Common myeloid progenitor, CD34-positive (primary cell): ENCODE measurements at regions of chr5 and their contacts with region 1.

Region 1: GRCh38 chr5:170614720-170615119 is 110.9 kb downstream of the KCNIP1 start:
- DNase-seq: no peak
- H3K4me3 ChIP-seq: no peak overlapping the region
- H3K27ac ChIP-seq: no peak overlapping the region
- H3K4me1 ChIP-seq: peaks cover 0 to 7% (median 1%) of the 10 kb centered on the region in 4 experiments
- H3K27me3 ChIP-seq: peaks cover 0 to 6% (median 0%) of the 10 kb centered on the region in 5 experiments

Region 2: GRCh38 chr5:170363671-170364070 is 251.0 kb before region 1 on chr5:
- CTCF ChIA-PET with region 1: no interaction called
- POLR2A ChIA-PET with region 1: no interaction called
- DNase-seq: peak; percentile 13 to 85 (median 80)
- H3K4me3 ChIP-seq: no peak overlapping the region
- H3K27ac ChIP-seq: no peak overlapping the region
- H3K4me1 ChIP-seq: peaks cover 10 to 66% (median 44%) of the 10 kb centered on the region in 4 experiments
- H3K27me3 ChIP-seq: no peaks in the 10 kb centered on the region

Region 3: DNA sequence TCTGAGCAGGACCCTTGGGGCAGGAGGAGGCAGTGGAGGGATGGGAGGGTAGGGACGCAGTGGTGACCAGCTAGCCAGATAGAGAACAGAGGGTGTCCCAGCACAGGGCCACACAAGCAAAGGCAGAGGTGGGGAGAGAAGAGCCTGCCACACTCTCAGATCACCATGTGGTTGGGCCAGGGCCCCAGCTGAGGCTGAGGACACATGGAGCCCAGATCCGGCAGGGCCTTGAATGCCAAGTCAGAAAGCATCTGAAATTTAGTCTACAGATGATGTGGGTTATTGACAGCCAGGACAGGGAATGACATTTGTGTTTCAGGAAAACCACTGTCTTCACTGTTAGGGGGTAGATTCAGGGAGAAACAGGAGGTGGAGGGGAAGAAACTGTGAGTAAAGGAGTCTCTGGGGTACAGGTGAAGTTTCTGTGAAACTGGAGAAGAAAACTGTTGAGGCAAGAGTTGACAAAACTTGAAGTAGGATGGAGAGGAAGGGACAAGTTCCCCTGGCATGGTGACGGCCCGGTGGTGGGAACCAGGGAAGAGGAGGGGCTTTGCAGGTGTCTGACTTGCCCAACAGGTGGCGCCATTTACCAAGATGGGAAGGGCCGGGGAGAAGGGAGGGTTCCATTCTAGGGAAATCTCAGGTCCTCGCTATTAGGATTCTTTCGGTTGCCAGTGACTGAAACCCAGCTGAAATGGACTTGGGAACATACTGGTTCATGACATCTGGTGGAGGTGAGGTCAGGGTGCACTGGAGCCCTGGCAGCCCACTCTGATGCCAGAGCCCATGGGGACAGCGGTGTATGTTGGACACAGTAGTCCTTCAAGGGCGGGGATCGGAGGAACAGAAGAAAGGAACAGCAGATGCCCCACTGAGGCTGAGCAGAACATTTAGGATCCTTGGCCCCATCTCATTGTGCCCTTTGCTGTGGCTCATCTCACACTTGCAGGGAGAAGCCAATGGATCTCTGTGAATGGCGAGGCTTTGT is 10.8 kb before region 1 on chr5:
- CTCF ChIA-PET with region 1: interaction called, 20 read pairs
- POLR2A ChIA-PET with region 1: no interaction called
- DNase-seq: peak; percentile 68 to 80 (median 69)
- H3K4me3 ChIP-seq: no peak overlapping the region
- H3K27ac ChIP-seq: no peak overlapping the region
- H3K4me1 ChIP-seq: peaks cover 0 to 8% (median 3%) of the 10 kb centered on the region in 4 experiments
- H3K27me3 ChIP-seq: peaks cover 0 to 18% (median 0%) of the 10 kb centered on the region in 5 experiments

Region 4: DNA sequence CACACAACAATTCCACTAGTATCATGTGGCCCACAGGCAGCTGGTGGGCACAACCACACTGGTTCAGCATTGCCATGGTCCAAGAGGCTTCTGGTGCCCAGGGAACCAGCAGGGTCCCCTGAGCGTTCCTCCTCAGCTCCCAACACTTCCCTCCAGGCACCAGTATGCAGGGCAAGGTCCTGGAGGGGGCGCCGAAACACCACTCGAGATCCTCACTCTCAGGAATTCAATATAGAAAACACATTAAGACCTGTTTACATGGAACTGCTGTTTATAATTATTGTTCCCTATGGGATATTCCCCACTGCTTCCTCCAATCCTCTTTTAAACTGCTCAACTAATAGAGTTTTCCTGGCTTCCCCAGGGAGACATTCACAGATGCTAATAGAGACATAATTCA is 76.9 kb after region 1 on chr5:
- CTCF ChIA-PET with region 1: no interaction called
- POLR2A ChIA-PET with region 1: no interaction called
- DNase-seq: no peak
- H3K4me3 ChIP-seq: no peak overlapping the region
- H3K27ac ChIP-seq: no peak overlapping the region
- H3K4me1 ChIP-seq: no peaks in the 10 kb centered on the region
- H3K27me3 ChIP-seq: peaks cover 2 to 72% (median 21%) of the 10 kb centered on the region in 5 experiments